Psoas muscle (tissue), 8 donors: ENCODE measurements at regions of chr17 and their contacts with region 1.

Region 1: DNA sequence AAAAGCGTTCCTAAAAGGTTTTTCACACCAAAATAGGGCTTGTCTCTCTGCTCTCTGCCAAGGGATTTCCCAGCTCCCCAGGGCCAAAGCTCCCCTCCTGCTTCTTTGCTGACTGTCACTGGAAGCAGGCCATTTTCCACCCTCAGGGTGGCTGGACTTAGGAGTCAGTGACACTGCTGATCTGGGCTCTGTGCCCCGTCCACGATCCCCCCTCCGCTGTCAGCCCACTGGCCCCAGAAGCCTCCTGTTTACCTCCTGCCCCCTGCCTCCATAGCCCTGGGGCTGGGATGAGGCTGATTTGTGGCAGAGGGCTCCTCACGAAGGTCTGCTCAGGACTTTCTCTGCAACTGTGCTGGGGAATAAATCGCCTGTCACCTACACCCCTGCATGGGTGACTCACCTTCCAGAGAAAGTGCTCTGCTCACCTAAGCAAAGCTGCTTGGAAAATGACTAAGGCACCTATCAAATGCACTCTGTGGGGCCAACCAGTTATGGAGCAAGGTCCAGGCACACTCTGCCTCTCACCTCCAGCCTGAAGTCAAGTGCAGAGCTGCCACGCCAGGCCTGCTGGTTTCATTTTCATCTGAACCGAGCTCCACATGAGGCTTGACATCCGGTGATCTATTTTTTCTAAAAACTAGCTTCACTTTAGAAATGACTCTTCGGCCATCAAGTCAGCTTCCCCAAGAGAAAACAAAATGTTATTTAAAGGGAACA is 4.9 kb downstream of the MAP3K14 start:
- DNase-seq: peak; percentile 68 to 88
- ATAC-seq: peak; percentile 77 to 82 (median 80)
- H3K4me3 ChIP-seq: peak overlapping the region; percentile 93
- H3K27ac ChIP-seq: peak overlapping the region; percentile 94
- H3K4me1 ChIP-seq: peaks cover 82% of the 10 kb centered on the region
- H3K27me3 ChIP-seq: no peaks in the 10 kb centered on the region
- CTCF ChIP-seq: no peak

Region 2: GRCh38 chr17:45235416-45236281 is 76.3 kb before region 1 on chr17:
- intact Hi-C with region 1: no loop called
- DNase-seq: peak; percentile 76 to 85
- ATAC-seq: peak; percentile 50 to 84 (median 63)
- H3K4me3 ChIP-seq: no peak overlapping the region
- H3K27ac ChIP-seq: no peak overlapping the region
- H3K4me1 ChIP-seq: no peaks in the 10 kb centered on the region
- H3K27me3 ChIP-seq: peaks cover 0 to 3% (median 2%) of the 10 kb centered on the region in 3 donors
- CTCF ChIP-seq: peak; percentile 73

Region 3: DNA sequence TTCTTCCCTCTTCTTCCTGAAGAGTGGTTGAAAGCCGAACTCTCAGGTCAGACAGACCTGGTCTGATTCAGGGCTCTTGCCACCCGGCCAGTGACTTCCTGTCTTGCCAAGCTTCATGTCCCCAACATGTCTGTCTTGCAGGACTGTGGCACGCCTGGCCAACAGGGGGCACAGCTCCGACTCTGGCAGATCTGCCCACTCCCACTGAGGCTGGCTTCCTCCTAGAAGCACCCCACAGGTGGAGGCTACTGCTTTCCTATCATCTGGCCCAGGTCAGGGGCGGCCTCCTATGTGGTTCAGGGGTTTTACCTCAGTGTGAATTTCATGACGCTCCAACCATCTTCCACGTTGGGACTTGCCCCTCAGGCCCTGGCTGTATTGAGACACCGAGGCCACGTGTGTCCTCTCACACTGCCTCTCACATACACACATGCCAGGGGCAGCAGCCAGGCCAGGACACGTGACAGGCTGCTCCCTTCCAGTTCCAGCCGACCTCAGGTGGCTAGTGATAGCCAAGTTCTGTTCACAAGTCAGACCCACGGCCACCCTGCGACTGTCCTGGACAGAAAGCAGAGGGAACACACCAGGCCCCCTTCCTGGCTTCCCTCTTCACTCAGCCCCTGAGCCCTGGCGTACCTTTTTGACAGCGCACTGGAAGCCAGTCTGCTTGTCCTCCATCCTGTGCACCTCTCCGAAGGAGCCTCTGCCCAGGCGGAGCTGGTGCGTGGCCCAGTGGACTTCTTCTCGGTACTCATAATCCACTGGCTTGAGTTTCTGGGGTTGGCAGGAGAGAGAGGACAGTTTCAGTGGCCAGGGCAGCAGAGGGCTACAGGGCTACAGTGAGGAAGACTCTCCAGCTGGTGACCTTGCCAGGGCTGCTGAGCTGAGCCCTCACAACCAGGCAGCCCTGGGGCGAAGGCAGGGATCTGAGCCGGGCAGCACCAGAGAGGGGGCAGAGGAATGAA is 27.5 kb before region 1 on chr17:
- intact Hi-C with region 1: loop called (anchors 1 to 5 kb)
- DNase-seq: peak; percentile 80 to 93
- ATAC-seq: peak; percentile 71 to 80 (median 76)
- H3K4me3 ChIP-seq: no peak overlapping the region
- H3K27ac ChIP-seq: peak overlapping the region; percentile 96
- H3K4me1 ChIP-seq: peaks cover 78% of the 10 kb centered on the region
- H3K27me3 ChIP-seq: no peaks in the 10 kb centered on the region
- CTCF ChIP-seq: peak; percentile 40

Region 4: DNA sequence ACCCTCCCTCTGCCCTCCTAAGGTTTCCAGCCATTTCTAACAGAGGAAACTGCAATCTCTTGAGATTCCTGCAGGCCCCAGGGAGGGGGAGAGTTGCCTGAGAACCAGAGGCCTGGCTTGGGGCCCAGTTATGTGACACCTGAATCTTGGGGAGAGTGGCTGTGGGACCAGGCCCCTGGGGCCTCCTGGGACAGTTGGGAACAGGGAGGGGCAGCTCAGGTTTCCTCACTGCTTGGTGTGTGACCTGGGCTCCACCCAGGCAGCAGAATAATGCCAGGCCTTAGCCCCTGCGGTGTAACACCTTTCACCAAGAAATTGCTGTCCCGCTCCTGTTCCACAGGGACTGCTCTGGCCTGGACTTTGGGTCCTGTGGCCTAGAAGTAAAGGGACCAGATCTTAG is 427.9 kb after region 1 on chr17:
- intact Hi-C with region 1: no loop called
- DNase-seq: peak in 1 of 2 donors; percentile 66
- ATAC-seq: peak; percentile 25 to 76 (median 63)
- H3K4me3 ChIP-seq: no peak overlapping the region
- H3K27ac ChIP-seq: peak overlapping the region; percentile 68
- H3K4me1 ChIP-seq: peaks cover 27% of the 10 kb centered on the region
- H3K27me3 ChIP-seq: no peaks in the 10 kb centered on the region
- CTCF ChIP-seq: no peak